Natural killer cell (primary cell): ENCODE measurements at regions of chr2 and their contacts with region 1.

Region 1: GRCh38 chr2:74876081-74876886 is 42.4 kb downstream of the HK2 start:
- DNase-seq: peak in 1 of 2 donors; percentile 78
- ATAC-seq: peak; percentile 71 to 85 (median 73)
- H3K4me3 ChIP-seq: no peak overlapping the region
- H3K4me3 Mint-ChIP-seq: no peak overlapping the region
- H3K27ac ChIP-seq: no peak overlapping the region
- H3K27ac Mint-ChIP-seq: no peak overlapping the region
- H3K4me1 ChIP-seq: peaks cover 3% of the 10 kb centered on the region
- H3K4me1 Mint-ChIP-seq: no peaks in the 10 kb centered on the region
- H3K27me3 ChIP-seq: no peaks in the 10 kb centered on the region
- H3K27me3 Mint-ChIP-seq: no peaks in the 10 kb centered on the region
- CTCF ChIP-seq: peak; percentile 70

Region 2: DNA sequence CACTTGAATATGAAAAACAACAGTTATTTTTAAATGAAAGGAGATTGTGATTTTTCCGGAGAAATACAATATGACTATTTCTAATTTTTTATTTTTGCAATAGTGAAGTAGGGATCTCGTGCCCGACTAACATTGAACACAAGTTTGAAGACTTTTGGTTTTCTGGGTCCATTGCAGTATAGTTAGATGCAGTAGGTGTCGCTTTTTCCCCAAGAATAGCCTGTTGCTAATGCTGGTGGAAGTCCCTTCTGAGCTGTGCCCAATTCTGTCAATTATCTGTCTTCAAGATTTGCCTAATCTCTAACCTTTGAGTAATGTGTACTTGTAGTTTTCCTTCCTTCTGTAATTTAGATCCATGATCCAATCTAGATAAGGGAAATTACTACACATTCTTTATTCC is 185.7 kb before region 1 on chr2:
- intact Hi-C with region 1: loop called (anchors 1 kb)
- DNase-seq: peak in 1 of 2 donors; percentile 63
- ATAC-seq: peak in 2 of 3 donors; percentile 59 to 64
- H3K4me3 ChIP-seq: no peak overlapping the region
- H3K4me3 Mint-ChIP-seq: no peak overlapping the region
- H3K27ac ChIP-seq: no peak overlapping the region
- H3K27ac Mint-ChIP-seq: no peak overlapping the region
- H3K4me1 ChIP-seq: no peaks in the 10 kb centered on the region
- H3K4me1 Mint-ChIP-seq: no peaks in the 10 kb centered on the region
- H3K27me3 ChIP-seq: no peaks in the 10 kb centered on the region
- H3K27me3 Mint-ChIP-seq: peaks cover 8 to 15% of the 10 kb centered on the region in 2 donors
- CTCF ChIP-seq: peak; percentile 40

Region 3: GRCh38 chr2:74715078-74715791 is 161.0 kb before region 1 on chr2:
- intact Hi-C with region 1: loop called (anchors 1 kb)
- DNase-seq: peak; percentile 69 to 87
- ATAC-seq: peak; percentile 90 to 91 (median 90)
- H3K4me3 ChIP-seq: peak overlapping the region; percentile 38
- H3K4me3 Mint-ChIP-seq: peak overlapping the region; percentile 92
- H3K27ac ChIP-seq: no peak overlapping the region
- H3K27ac Mint-ChIP-seq: peak overlapping the region in 1 of 2 donors; percentile 55
- H3K4me1 ChIP-seq: peaks cover 5% of the 10 kb centered on the region
- H3K4me1 Mint-ChIP-seq: peaks cover 0 to 5% of the 10 kb centered on the region in 2 donors
- H3K27me3 ChIP-seq: peaks cover 6% of the 10 kb centered on the region
- H3K27me3 Mint-ChIP-seq: peaks cover 0 to 5% of the 10 kb centered on the region in 2 donors
- CTCF ChIP-seq: peak; percentile 95

Region 4: GRCh38 chr2:74777161-74777900 is 99.0 kb before region 1 on chr2:
- intact Hi-C with region 1: no loop called
- DNase-seq: peak in 1 of 2 donors; percentile 7
- ATAC-seq: no peak
- H3K4me3 ChIP-seq: no peak overlapping the region
- H3K4me3 Mint-ChIP-seq: no peak overlapping the region
- H3K27ac ChIP-seq: no peak overlapping the region
- H3K27ac Mint-ChIP-seq: no peak overlapping the region
- H3K4me1 ChIP-seq: peaks cover 8% of the 10 kb centered on the region
- H3K4me1 Mint-ChIP-seq: no peaks in the 10 kb centered on the region
- H3K27me3 ChIP-seq: no peaks in the 10 kb centered on the region
- H3K27me3 Mint-ChIP-seq: no peaks in the 10 kb centered on the region
- CTCF ChIP-seq: no peak

Region 5: GRCh38 chr2:74836319-74837014 is 39.8 kb before region 1 on chr2:
- intact Hi-C with region 1: loop called (anchors 1 kb)
- DNase-seq: peak in 1 of 2 donors; percentile 62
- ATAC-seq: no peak
- H3K4me3 ChIP-seq: peak overlapping the region; percentile 56
- H3K4me3 Mint-ChIP-seq: peak overlapping the region; percentile 89
- H3K27ac ChIP-seq: no peak overlapping the region
- H3K27ac Mint-ChIP-seq: no peak overlapping the region
- H3K4me1 ChIP-seq: peaks cover 31% of the 10 kb centered on the region
- H3K4me1 Mint-ChIP-seq: peaks cover 15 to 17% of the 10 kb centered on the region in 2 donors
- H3K27me3 ChIP-seq: peaks cover 10% of the 10 kb centered on the region
- H3K27me3 Mint-ChIP-seq: peaks cover 32 to 34% of the 10 kb centered on the region in 2 donors
- CTCF ChIP-seq: peak; percentile 61